HEK293 (cell line): ENCODE measurements at regions of chr17 and their contacts with region 1.

Region 1: DNA sequence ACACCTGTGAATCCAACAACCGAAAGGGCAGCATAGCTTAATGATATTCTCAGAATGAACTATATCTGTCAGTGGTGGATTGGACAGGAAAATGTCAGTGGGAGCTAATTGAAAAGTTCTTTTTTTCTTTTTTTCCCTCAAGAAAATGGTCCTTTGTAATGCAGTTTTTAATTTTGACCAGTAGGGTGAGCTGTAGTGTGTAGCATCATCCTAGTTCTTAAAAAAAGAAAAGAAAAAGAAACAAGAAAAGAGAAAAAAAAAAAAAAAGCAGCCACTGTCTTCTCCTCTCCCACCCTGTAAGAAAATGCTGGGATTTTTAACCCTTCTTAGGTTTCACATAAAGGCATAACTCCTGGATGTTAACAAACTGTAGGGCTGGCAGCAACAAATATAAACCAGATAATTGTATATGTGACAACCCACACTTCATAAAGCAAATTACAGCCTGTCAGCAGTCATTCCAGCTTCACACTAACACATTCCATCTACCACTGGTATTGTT is 78.1 kb downstream of the SKAP1 start:
- H3K4me3 ChIP-seq: no peak overlapping the region
- H3K27ac ChIP-seq: no peak overlapping the region
- H3K4me1 ChIP-seq: peaks cover 3% of the 10 kb centered on the region; the same call in 1 of the 2 replicates
- CTCF ChIP-seq: no peak

Region 2: DNA sequence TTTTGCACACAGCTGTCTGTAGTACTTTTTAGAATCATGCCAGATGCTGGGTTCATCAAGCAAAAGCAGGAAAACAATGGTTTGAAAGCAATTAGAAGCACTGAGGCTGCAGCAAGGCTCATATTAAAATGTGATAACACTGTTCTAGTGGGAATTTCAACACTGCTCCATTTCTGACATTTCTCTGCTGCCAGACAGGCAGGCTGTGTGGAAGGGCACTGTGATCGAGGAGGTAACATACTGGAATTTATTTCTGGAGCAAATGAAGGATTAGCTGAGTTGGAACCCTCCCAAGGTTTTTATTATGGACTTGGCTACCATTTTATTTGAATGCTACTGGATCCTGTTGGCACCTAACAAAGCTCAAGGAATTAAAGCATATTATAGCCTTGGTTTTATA is 11.3 kb after region 1 on chr17:
- CTCF ChIA-PET with region 1: interaction called, 27 read pairs
- POLR2A ChIA-PET with region 1: no interaction called
- H3K4me3 ChIP-seq: no peak overlapping the region
- H3K27ac ChIP-seq: no peak overlapping the region
- H3K4me1 ChIP-seq: no peaks in the 10 kb centered on the region
- CTCF ChIP-seq: no peak

Region 3: GRCh38 chr17:48406936-48407567 is 55.2 kb after region 1 on chr17:
- CTCF ChIA-PET with region 1: no interaction called
- POLR2A ChIA-PET with region 1: no interaction called
- H3K4me3 ChIP-seq: no peak overlapping the region
- H3K27ac ChIP-seq: peak overlapping the region; percentile 52
- H3K4me1 ChIP-seq: peaks cover 8% of the 10 kb centered on the region
- CTCF ChIP-seq: no peak